WTC11 (cell line): ENCODE measurements at regions of chr15 and their contacts with region 1.

Region 1: GRCh38 chr15:89129123-89129815 is 41.0 kb downstream of the ABHD2 start:
- DNase-seq: peak; percentile 81
- ATAC-seq: peak; percentile 87
- H3K4me3 Mint-ChIP-seq: no peak overlapping the region
- H3K27ac Mint-ChIP-seq: no peak overlapping the region
- H3K4me1 Mint-ChIP-seq: no peaks in the 10 kb centered on the region
- H3K27me3 Mint-ChIP-seq: no peaks in the 10 kb centered on the region
- CTCF ChIP-seq: peak; percentile 68

Region 2: GRCh38 chr15:88897456-88898194 is 231.6 kb before region 1 on chr15:
- CTCF ChIA-PET with region 1: interaction called, 11 read pairs
- POLR2A ChIA-PET with region 1: no interaction called
- DNase-seq: peak; percentile 53
- ATAC-seq: 0 out of 2 replicates have a peak, but pooled peaks have one; percentile 1
- H3K4me3 Mint-ChIP-seq: no peak overlapping the region; the same call in 1 of the 2 replicates
- H3K27ac Mint-ChIP-seq: peak overlapping the region; percentile 93
- H3K4me1 Mint-ChIP-seq: peaks cover 53% of the 10 kb centered on the region
- H3K27me3 Mint-ChIP-seq: 0 out of 2 replicates have a peak, but pooled peaks cover 2% of the 10 kb centered on the region
- CTCF ChIP-seq: no peak

Region 3: DNA sequence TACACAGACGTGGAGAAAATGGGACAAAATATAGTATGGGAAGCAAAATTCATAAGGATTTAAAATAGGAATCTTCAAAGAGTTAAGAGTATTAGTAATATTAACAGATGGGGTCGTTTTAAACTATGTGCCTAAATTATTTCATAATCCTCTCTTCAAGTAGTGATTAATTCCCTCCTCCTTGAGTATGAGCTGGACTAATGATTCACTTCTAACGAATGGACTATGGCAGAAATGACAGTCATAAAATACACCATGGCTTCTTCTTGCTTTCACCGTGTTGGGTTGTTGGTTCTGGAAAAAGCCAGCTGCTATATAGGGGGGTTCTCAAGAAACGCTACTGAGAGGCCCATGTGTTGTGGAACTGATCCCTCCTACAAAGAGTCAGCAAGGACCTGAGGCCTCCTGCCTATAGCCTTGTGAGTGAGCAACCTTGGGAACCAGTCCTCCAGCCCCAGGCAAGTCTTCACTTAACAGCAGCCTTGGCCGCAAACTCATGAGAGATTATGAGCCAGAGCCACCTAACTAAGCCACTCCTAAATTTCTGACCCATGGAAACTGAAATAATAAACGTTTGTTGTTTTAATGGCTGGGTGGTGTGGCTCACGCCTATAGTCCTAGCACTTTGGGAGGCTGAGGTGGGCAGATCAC is 105.8 kb before region 1 on chr15:
- CTCF ChIA-PET with region 1: no interaction called
- POLR2A ChIA-PET with region 1: no interaction called
- DNase-seq: no peak
- ATAC-seq: no peak
- H3K4me3 Mint-ChIP-seq: no peak overlapping the region
- H3K27ac Mint-ChIP-seq: no peak overlapping the region
- H3K4me1 Mint-ChIP-seq: peaks cover 13% of the 10 kb centered on the region
- H3K27me3 Mint-ChIP-seq: no peaks in the 10 kb centered on the region; the same call in 1 of the 2 replicates
- CTCF ChIP-seq: no peak

Region 4: GRCh38 chr15:89057504-89058133 is 71.7 kb before region 1 on chr15:
- CTCF ChIA-PET with region 1: interaction called, 49 read pairs
- POLR2A ChIA-PET with region 1: no interaction called
- DNase-seq: peak; percentile 95
- ATAC-seq: peak; percentile 94
- H3K4me3 Mint-ChIP-seq: no peak overlapping the region
- H3K27ac Mint-ChIP-seq: peak overlapping the region; percentile 45
- H3K4me1 Mint-ChIP-seq: peaks cover 11% of the 10 kb centered on the region
- H3K27me3 Mint-ChIP-seq: no peaks in the 10 kb centered on the region
- CTCF ChIP-seq: peak; percentile 100

Region 5: GRCh38 chr15:89101302-89102191 is 27.7 kb before region 1 on chr15:
- CTCF ChIA-PET with region 1: interaction called, 36 read pairs
- POLR2A ChIA-PET with region 1: no interaction called
- DNase-seq: no peak
- ATAC-seq: no peak
- H3K4me3 Mint-ChIP-seq: no peak overlapping the region
- H3K27ac Mint-ChIP-seq: no peak overlapping the region
- H3K4me1 Mint-ChIP-seq: peaks cover 20% of the 10 kb centered on the region
- H3K27me3 Mint-ChIP-seq: no peaks in the 10 kb centered on the region
- CTCF ChIP-seq: no peak

Region 6: DNA sequence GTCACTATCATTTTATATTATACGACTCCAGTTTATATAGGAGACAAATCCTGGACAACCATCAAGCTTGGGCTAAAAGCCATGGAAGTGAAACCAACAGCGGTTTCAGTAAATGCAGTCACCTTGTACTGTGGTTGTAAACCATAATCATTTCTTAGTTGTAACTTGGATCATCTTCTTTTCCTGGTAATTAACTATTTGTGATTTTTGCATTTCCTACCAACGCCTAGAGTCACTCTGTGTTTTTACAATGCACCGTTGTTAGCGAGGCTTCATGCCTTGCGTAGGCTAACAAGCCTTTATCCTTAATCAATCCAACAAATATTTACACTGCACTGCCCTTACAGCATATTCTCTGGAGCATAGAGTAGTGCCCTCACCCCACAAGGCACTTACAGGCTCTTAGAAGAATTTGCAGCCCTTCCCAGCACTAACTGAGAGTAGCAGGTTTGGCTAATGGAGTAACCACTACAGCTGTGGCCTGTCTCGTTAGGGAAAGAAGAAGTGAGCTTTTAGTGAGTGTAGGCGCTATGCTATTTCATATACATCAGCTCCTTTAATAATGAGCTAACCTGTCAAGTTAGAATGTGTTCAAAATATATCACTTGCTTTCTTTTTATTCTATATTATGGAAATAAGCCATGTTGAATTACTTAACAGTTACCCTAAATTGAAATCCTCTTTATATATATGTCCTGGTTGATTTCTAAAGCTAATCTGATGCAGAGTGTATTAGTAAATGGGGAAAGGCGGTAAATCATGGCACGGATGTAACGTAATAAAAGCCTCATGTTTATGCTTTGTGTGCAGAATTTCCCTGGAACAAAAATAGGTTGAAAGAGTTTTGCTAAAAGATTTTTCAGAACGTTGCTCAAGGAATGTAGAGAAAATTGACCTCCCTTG is 21.7 kb after region 1 on chr15:
- CTCF ChIA-PET with region 1: interaction called, 15 read pairs
- POLR2A ChIA-PET with region 1: interaction called, 3 read pairs
- DNase-seq: no peak
- ATAC-seq: no peak
- H3K4me3 Mint-ChIP-seq: no peak overlapping the region
- H3K27ac Mint-ChIP-seq: peak overlapping the region; percentile 26; the same call in 1 of the 2 replicates
- H3K4me1 Mint-ChIP-seq: peaks cover 16% of the 10 kb centered on the region
- H3K27me3 Mint-ChIP-seq: no peaks in the 10 kb centered on the region
- CTCF ChIP-seq: no peak